Adrenal gland (tissue), 19 donors: ENCODE measurements at regions of chr15 and their contacts with region 1.

Region 1: GRCh38 chr15:59689626-59690236 is 611 bp upstream of the BNIP2 start:
- DNase-seq: peak; percentile 76 to 95 (median 89)
- H3K4me3 ChIP-seq: peak overlapping the region in 3 of 4 donors; percentile 44 to 86 (median 78)
- H3K27ac ChIP-seq: peak overlapping the region; percentile 91 to 98 (median 97)
- H3K4me1 ChIP-seq: peaks cover 22 to 35% of the 10 kb centered on the region in 2 donors
- H3K27me3 ChIP-seq: no peaks in the 10 kb centered on the region
- CTCF ChIP-seq: peak in 1 of 6 experiments; percentile 11
- POLR2A ChIP-seq: no peak

Region 2: GRCh38 chr15:59562448-59563186 is 127.1 kb before region 1 on chr15:
- intact Hi-C with region 1: no loop called
- DNase-seq: no peak
- H3K4me3 ChIP-seq: no peak overlapping the region
- H3K27ac ChIP-seq: no peak overlapping the region
- H3K4me1 ChIP-seq: no peaks in the 10 kb centered on the region
- H3K27me3 ChIP-seq: peaks cover 5% of the 10 kb centered on the region
- CTCF ChIP-seq: no peak
- POLR2A ChIP-seq: no peak

Region 3: DNA sequence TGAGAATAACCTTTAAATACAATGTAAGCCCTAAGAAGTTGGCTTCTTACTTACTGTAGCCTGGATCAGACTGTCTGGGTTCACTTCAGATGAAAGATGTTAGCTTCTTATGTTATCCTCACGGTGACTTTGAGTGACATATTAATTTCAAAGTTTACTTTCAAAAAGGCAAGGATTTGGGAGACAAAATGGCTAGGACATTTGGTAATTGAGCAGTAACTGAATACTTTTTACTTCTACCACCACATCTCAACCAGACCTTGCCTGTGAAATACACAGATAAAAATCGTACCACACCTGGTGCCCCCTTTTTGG is 35.4 kb after region 1 on chr15:
- intact Hi-C with region 1: no loop called
- DNase-seq: no peak
- H3K4me3 ChIP-seq: no peak overlapping the region
- H3K27ac ChIP-seq: no peak overlapping the region
- H3K4me1 ChIP-seq: no peaks in the 10 kb centered on the region
- H3K27me3 ChIP-seq: peaks cover 7% of the 10 kb centered on the region
- CTCF ChIP-seq: no peak
- POLR2A ChIP-seq: no peak

Region 4: GRCh38 chr15:60326824-60327654 is 637.3 kb after region 1 on chr15:
- intact Hi-C with region 1: loop called in 1 of 2 experiments (anchors 10 kb)
- DNase-seq: peak in 2 of 7 donors; percentile 31 to 36
- H3K4me3 ChIP-seq: no peak overlapping the region
- H3K27ac ChIP-seq: no peak overlapping the region
- H3K4me1 ChIP-seq: no peaks in the 10 kb centered on the region
- H3K27me3 ChIP-seq: peaks cover 33% of the 10 kb centered on the region
- CTCF ChIP-seq: peak; percentile 77 to 86 (median 82)
- POLR2A ChIP-seq: no peak